A673 (cell line): ENCODE measurements at regions of chr2 and their contacts with region 1.

Region 1: DNA sequence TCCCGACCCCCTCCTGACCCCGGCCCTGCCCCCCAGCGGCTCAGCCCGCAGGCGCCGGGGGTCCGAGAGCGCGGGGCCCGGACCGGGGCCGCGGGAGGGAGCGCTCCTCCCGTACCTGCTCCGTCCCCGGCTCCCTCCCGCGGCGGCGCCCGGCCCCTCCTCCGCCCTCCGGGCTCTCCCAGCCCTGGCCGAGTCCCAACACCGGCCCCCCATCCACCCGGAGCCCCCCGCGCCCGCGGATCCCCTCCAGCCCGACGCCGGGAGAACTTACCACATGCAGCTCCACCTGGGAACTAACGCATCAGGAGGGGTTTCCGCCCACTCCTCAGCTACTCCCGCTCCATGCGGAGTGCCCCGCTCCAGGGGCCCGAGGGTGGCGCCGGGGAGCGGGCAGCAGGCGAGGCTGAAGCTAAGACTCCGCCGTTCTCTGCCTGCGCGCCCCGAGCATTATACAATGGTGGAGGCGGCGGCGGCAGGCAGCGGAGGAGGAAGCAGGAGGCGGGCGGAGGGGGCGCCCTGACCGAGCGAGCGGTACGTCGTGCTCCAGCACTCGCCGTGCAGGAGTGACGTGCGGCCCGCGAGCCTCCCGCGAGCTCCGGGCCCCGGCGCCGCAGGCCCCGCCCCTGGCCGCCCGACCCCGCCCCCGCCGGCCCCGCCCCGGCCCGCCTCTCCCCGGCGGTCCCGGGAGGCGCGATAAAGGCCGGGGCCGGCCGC is at the start of gene SERTAD2:
- DNase-seq: peak; percentile 91
- H3K4me3 ChIP-seq: peak within 1 kb of the TSS; percentile 94
- H3K27ac ChIP-seq: peak within 1 kb of the TSS; percentile 96
- H3K4me1 ChIP-seq: peaks cover 32% of the 10 kb centered on the region
- H3K27me3 ChIP-seq: no peaks in the 10 kb centered on the region
- CTCF ChIP-seq: peak; percentile 22; the same call in 1 of the 2 replicates
- total RNA-seq, gene SERTAD2: 20.8 and 22.2 TPM in 2 replicates

Region 2: GRCh38 chr2:64523666-64524603 is 129.6 kb before region 1 on chr2 and contains the start of gene AFTPH:
- CTCF ChIA-PET with region 1: no interaction called
- POLR2A ChIA-PET with region 1: no interaction called
- intact Hi-C with region 1: loop called (anchors 5 kb)
- DNase-seq: peak; percentile 99
- H3K4me3 ChIP-seq: peak within 1 kb of the TSS; percentile 94
- H3K27ac ChIP-seq: peak within 1 kb of the TSS; percentile 84
- H3K4me1 ChIP-seq: peaks cover 16% of the 10 kb centered on the region
- H3K27me3 ChIP-seq: no peaks in the 10 kb centered on the region
- CTCF ChIP-seq: 0 out of 2 replicates have a peak, but pooled peaks have one; percentile 7
- total RNA-seq, gene AFTPH: 18.8 and 19.5 TPM in 2 replicates

Region 3: DNA sequence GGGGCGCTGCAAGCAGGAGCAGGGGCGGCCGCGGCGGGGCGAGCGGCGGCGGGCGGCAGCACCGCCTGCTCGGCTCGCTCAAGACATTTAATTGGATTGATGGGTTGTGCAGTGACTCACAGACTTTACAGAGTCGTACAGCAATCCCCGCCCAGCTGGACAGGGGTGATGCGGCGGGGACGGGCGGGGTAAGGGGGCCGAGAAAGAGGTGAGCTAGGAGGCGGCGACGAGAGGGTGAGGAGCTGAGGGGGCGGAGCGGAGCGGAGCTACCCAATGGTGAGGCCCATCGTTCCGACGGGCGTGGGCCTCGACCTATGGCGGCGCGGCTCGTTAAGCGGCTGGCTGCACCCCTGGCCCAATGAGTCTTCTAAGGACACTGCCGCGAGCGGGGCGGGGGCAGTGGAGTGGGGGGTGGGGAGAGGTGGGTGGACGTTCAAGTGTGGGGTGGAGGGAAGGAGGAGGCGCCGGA is 97.3 kb after region 1 on chr2:
- CTCF ChIA-PET with region 1: interaction called, 4 read pairs
- POLR2A ChIA-PET with region 1: no interaction called
- intact Hi-C with region 1: loop called (anchors 2 kb)
- DNase-seq: peak; percentile 100
- H3K4me3 ChIP-seq: peak overlapping the region; percentile 78
- H3K27ac ChIP-seq: peak overlapping the region; percentile 91
- H3K4me1 ChIP-seq: peaks cover 16% of the 10 kb centered on the region
- H3K27me3 ChIP-seq: no peaks in the 10 kb centered on the region
- CTCF ChIP-seq: no peak